Activated CD4-positive, alpha-beta memory T cell treated with anti-CD3 and anti-CD28 coated beads, Interleukin-2, amount 10 ng/mL, durations not matched to agents 7 days and 5 days (primary cell): ENCODE measurements at regions of chr5 and their contacts with region 1.

Region 1: GRCh38 chr5:58886315-58887207 is 303.7 kb downstream of the RAB3C start:
- DNase-seq: peak; percentile 70
- H3K4me3 Mint-ChIP-seq: no peak overlapping the region
- H3K27ac Mint-ChIP-seq: peak overlapping the region; percentile 75
- H3K4me1 Mint-ChIP-seq: peaks cover 41% of the 10 kb centered on the region
- H3K27me3 Mint-ChIP-seq: peaks cover 4% of the 10 kb centered on the region

Region 2: DNA sequence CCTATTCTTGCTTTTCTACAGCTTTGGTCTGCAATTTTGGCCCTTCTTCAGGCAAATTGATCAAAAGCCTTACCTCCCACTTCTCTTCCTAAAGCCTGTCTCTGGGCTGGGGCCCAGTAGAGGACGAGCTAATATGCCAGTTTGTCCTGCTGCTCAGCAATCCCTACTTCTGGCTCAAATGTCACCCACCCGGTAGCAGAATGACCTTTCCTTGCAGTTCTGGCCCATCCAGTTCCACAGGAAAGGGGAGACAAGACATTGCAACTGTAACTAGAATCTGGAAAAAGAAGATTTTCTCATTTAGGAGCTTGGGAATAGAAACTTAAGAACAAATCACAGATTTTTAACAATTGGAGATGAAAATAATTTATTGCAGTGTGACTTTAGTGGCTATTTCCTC is 42.2 kb before region 1 on chr5:
- CTCF ChIA-PET with region 1: no interaction called
- POLR2A ChIA-PET with region 1: no interaction called
- DNase-seq: no peak
- H3K4me3 Mint-ChIP-seq: no peak overlapping the region
- H3K27ac Mint-ChIP-seq: no peak overlapping the region
- H3K4me1 Mint-ChIP-seq: no peaks in the 10 kb centered on the region
- H3K27me3 Mint-ChIP-seq: peaks cover 5% of the 10 kb centered on the region

Region 3: DNA sequence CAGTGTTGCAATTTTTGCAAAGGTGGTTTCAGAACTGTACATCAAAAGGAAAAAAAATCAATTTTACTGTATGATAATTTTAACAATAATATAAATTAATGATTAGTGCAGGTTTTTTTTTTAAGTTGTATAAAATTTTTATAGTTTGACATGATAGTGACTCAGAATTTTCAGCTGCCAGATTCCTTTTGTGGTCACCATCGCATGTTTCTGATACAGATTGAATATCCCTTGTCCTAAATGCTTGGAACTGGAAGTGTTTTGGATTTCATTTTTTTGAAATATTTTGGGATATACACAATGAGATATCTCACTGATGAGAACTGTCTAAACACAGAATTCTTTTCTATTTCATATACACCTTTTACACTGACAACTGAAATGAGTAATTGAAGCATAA is 57.7 kb after region 1 on chr5:
- CTCF ChIA-PET with region 1: no interaction called
- POLR2A ChIA-PET with region 1: no interaction called
- DNase-seq: no peak
- H3K4me3 Mint-ChIP-seq: no peak overlapping the region
- H3K27ac Mint-ChIP-seq: no peak overlapping the region
- H3K4me1 Mint-ChIP-seq: peaks cover 3% of the 10 kb centered on the region
- H3K27me3 Mint-ChIP-seq: peaks cover 5% of the 10 kb centered on the region

Region 4: GRCh38 chr5:58974601-58975000 is 88.0 kb after region 1 on chr5:
- CTCF ChIA-PET with region 1: interaction called, 11 read pairs
- POLR2A ChIA-PET with region 1: no interaction called
- DNase-seq: no peak
- H3K4me3 Mint-ChIP-seq: no peak overlapping the region
- H3K27ac Mint-ChIP-seq: no peak overlapping the region
- H3K4me1 Mint-ChIP-seq: peaks cover 2% of the 10 kb centered on the region
- H3K27me3 Mint-ChIP-seq: no peaks in the 10 kb centered on the region

Region 5: GRCh38 chr5:59174248-59174844 is 287.8 kb after region 1 on chr5:
- CTCF ChIA-PET with region 1: interaction called, 68 read pairs
- POLR2A ChIA-PET with region 1: interaction called, 5 read pairs
- DNase-seq: peak; percentile 37
- H3K4me3 Mint-ChIP-seq: no peak overlapping the region
- H3K27ac Mint-ChIP-seq: no peak overlapping the region
- H3K4me1 Mint-ChIP-seq: peaks cover 41% of the 10 kb centered on the region
- H3K27me3 Mint-ChIP-seq: no peaks in the 10 kb centered on the region

Region 6: DNA sequence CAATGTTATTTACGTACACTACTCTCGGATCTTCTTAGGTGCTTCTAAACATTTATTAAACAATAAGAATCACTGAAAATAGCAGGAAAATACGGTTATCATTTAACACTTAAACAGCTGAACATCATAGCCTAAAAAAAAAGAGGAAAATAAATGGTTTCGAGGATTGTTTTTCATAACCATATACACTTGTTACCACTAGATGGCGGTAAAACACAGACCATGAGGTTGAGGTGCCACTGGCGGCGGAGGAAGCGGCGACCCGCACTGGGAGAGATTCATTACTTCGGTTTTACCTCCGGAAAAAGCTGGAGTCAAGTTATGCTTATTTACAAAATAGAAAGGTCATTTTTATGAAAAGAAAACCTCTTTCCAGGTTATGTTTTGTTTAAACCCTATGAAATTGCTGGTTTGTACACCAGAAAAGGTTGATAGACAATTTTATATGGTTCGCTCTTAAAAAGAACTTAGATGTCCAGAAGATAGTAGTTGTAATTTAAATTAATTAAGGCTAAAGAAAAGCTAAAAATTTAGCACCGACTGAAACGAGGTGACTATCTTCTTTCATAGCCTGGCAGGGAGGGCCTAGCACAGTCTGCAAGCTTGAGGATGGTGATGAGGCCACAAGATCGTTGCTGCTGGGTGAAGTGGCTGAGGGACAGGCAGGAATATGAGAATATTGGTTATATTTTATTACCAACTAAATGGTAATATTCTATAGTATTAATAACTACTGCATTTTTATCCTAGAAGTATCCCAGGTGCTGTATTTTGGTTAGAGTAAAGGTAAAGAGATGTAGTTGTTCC is 302.1 kb after region 1 on chr5:
- CTCF ChIA-PET with region 1: interaction called, 24 read pairs
- POLR2A ChIA-PET with region 1: no interaction called
- DNase-seq: peak; percentile 66
- H3K4me3 Mint-ChIP-seq: peak overlapping the region; percentile 9
- H3K27ac Mint-ChIP-seq: no peak overlapping the region
- H3K4me1 Mint-ChIP-seq: peaks cover 8% of the 10 kb centered on the region
- H3K27me3 Mint-ChIP-seq: peaks cover 45% of the 10 kb centered on the region